PC-9 (cell line): ENCODE measurements at regions of chr3 and their contacts with region 1.

Region 1: GRCh38 chr3:127226946-127227842 is 34.3 kb downstream of the PRR23E start:
- DNase-seq: peak in 1 of 2 experiments; percentile 50
- H3K4me3 ChIP-seq: no peak overlapping the region
- H3K27ac ChIP-seq: no peak overlapping the region
- H3K4me1 ChIP-seq: no peaks in the 10 kb centered on the region
- H3K27me3 ChIP-seq: no peaks in the 10 kb centered on the region
- CTCF ChIP-seq: no peak

Region 2: GRCh38 chr3:127211118-127212060 is 15.8 kb before region 1 on chr3:
- CTCF ChIA-PET with region 1: no interaction called
- POLR2A ChIA-PET with region 1: interaction called, 11 read pairs
- intact Hi-C with region 1: no loop called
- DNase-seq: no peak
- H3K4me3 ChIP-seq: no peak overlapping the region
- H3K27ac ChIP-seq: no peak overlapping the region
- H3K4me1 ChIP-seq: no peaks in the 10 kb centered on the region
- H3K27me3 ChIP-seq: no peaks in the 10 kb centered on the region
- CTCF ChIP-seq: no peak